GM13977 (cell line): ENCODE measurements at regions of chr9 and their contacts with region 1.

Region 1: GRCh38 chr9:133485361-133486260 is 6.7 kb upstream of the SLC2A6 start:
- DNase-seq: peak; percentile 60
- CTCF ChIP-seq: peak; percentile 33

Region 2: DNA sequence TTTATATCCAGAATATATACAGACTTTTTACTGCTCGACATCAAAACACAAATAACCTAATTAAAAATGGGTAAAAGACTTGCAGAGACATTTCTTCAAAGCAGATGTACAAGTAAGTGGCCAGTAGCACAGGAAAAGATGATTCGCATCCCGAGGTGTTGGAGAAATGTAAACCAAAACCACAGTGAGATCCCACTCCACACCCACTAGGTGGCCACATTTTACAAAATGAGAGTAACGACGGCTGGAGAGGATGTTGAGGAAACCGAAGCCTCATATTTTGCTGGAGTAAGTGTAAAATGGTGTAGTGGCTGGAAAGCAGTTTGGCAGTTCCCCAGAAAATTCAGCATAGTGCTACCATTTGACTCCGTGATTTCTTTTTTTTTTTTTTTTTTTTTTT is 300.6 kb before region 1 on chr9:
- in situ Hi-C with region 1: loop called (anchors 10 kb)
- DNase-seq: peak; percentile 30
- CTCF ChIP-seq: peak; percentile 41

Region 3: DNA sequence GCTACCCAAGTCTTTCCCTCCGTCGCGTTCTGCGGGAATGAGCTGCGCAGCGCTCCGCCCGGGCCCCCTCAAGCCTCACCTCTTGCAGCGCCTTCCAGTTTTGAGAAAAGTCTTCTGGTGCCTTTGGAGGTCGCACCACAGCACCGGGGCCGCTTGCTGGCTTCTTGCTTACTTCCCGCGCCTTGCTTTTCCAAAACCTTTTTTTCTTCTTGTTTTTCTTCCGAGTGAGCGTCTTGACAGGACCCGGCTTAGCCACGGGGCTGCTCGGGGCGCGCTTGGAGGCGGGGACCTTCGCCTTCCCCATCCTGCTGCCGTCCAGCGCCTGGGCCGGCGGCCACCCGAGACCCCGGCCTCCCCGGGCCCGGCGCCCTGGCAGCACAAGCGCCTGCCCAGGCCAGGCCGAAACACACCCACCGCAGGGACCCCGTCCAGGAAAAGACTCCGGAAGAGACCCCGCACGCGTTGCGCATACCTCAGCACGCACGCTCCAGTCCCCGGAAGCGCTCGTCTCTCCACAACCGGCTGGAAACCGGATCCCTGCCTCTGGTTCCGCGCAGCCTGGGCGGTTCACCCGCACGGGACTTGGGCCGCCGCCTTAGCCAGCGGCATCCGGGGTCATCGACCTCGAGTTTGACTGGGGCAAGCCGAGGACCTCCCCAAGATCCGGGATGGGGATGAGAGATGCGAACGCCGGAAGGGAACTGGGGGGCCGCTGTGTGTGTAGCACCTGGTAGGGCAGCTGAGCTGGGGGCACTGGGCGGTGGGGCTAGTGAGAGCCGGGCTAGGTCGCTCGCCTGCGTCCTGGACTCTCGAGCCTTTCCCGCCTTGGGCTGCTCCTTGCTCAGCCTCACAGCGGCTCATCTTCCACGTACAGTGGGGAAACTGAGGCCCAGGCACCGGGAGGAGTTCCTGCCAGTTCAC is 67.8 kb before region 1 on chr9 and contains the start of gene REXO4:
- in situ Hi-C with region 1: loop called (anchors 10 kb)
- DNase-seq: peak; percentile 80
- CTCF ChIP-seq: peak; percentile 0